ENCODE measurements at regions of chr1 and their contacts with region 1.

Region 1: GRCh38 chr1:232524056-232524455 is 105.9 kb downstream of the SIPA1L2 start:
- DNase-seq: no peak
- H3K4me3 ChIP-seq: no peak overlapping the region
- H3K27ac ChIP-seq: no peak overlapping the region
- H3K27me3 ChIP-seq: no peaks in the 10 kb centered on the region
- CTCF ChIP-seq: no peak

Region 2: DNA sequence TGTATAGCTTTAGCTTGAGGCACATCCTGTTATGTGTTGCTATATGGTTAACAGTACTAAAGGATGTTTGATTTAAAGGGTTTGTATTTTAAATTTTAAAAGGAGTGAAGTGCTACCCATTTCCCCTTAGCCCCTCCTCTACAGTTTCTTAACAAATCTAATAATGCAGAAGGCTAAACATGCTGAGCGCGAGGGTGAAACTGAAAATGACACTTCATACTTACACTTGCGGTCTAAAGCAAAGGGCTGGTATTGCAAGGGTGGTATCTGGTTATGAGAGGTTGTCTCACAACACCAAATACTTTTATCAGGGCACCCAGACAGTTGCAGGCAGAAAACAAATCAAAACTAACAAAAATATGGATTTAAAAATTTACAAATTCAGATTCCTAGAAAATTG is 66.5 kb before region 1 on chr1:
- CTCF ChIA-PET with region 1: no interaction called
- POLR2A ChIA-PET with region 1: no interaction called
- DNase-seq: no peak
- H3K4me3 ChIP-seq: no peak overlapping the region
- H3K27ac ChIP-seq: no peak overlapping the region
- H3K27me3 ChIP-seq: no peaks in the 10 kb centered on the region
- CTCF ChIP-seq: no peak

Region 3: GRCh38 chr1:232538224-232538942 is 14.3 kb after region 1 on chr1:
- CTCF ChIA-PET with region 1: no interaction called
- POLR2A ChIA-PET with region 1: interaction called, 11 read pairs
- DNase-seq: no peak
- H3K4me3 ChIP-seq: no peak overlapping the region
- H3K27ac ChIP-seq: no peak overlapping the region
- H3K27me3 ChIP-seq: no peaks in the 10 kb centered on the region
- CTCF ChIP-seq: no peak